Spleen (tissue), 13 donors: ENCODE measurements at regions of chr12 and their contacts with region 1.

Region 1: DNA sequence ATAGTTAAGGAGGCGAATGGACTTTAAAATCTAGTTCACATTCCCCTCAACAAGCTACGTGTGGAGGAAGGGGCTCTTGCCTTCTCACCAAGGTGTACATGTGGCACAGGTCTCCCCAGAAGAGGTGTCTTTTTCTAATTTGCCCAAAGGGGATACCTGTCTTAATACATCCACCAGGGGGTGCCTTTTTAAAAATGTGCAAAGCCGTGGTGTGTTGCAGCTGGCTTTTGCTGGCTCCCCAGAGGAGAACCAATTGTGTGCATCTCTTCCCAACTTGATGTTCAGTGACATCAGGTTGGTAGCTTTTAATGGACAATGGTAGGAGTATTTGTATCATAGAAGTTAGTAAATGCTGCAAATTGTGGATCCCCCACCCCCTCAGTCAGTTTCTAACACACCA is 33.8 kb downstream of the CREBL2 start:
- DNase-seq: no peak
- H3K4me3 ChIP-seq: no peak overlapping the region
- H3K27ac ChIP-seq: no peak overlapping the region
- H3K4me1 ChIP-seq: no peaks in the 10 kb centered on the region
- H3K27me3 ChIP-seq: no peaks in the 10 kb centered on the region
- CTCF ChIP-seq: peak in 10 of 11 experiments; percentile 28 to 67 (median 57)
- POLR2A ChIP-seq: no peak

Region 2: GRCh38 chr12:12736759-12737676 is 91.5 kb after region 1 on chr12:
- intact Hi-C with region 1: loop called (anchors 5 kb)
- DNase-seq: no peak
- H3K4me3 ChIP-seq: peak overlapping the region in 3 of 8 donors; percentile 0 to 36 (median 11)
- H3K27ac ChIP-seq: peak overlapping the region in 7 of 8 donors; percentile 54 to 82 (median 80)
- H3K4me1 ChIP-seq: peaks cover 15 to 59% (median 36%) of the 10 kb centered on the region in 6 donors
- H3K27me3 ChIP-seq: no peaks in the 10 kb centered on the region
- CTCF ChIP-seq: peak; percentile 54 to 90 (median 74)
- POLR2A ChIP-seq: no peak